Activated B cell treated with CpG ODN at 0.5 μM for 24 hours (primary cell): ENCODE measurements at regions of chr1 and their contacts with region 1.

Region 1: DNA sequence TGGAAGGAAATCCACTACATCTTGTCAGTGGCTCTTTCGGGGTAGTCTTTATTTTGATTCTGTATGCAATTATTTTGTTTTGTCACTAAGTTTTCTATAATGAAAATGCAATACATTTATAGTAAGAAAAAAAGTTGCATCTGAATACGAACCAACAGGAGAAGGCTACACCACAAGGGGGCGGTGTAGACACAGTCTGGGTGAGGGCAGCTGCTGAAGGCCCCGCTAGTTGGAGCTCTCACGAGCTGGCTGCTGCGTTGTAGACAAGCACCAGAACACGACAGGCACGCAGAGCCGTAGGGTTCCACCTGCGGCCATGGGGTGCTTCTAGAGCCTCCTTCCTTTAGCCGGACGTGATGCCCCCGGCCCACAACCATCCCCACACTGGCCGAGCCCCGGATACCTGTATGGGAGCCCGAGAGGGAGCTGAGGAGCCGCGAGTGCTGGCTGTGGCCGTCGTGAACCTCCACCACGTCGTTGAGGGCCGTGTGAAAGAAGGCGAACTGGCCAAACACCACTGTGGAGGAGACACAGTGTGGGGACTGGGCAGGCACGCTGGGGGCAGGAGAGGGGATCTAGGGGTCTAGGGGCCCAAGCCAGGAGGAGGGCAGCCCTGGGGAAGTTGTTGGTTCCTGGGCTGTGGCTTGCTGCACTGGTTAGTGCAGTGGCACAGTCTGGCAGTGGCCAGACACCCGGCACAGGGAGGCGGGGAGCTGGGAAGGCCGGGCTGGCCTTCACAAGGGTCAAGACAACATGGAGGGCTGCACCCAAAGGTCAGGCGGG is 160.8 kb downstream of the ZSCAN20 start:
- DNase-seq: peak; percentile 55
- ATAC-seq: peak; percentile 75
- H3K4me3 Mint-ChIP-seq: no peak overlapping the region
- H3K27ac Mint-ChIP-seq: no peak overlapping the region
- H3K4me1 Mint-ChIP-seq: no peaks in the 10 kb centered on the region
- H3K27me3 Mint-ChIP-seq: peaks cover 31% of the 10 kb centered on the region
- CTCF ChIP-seq: peak; percentile 83

Region 2: DNA sequence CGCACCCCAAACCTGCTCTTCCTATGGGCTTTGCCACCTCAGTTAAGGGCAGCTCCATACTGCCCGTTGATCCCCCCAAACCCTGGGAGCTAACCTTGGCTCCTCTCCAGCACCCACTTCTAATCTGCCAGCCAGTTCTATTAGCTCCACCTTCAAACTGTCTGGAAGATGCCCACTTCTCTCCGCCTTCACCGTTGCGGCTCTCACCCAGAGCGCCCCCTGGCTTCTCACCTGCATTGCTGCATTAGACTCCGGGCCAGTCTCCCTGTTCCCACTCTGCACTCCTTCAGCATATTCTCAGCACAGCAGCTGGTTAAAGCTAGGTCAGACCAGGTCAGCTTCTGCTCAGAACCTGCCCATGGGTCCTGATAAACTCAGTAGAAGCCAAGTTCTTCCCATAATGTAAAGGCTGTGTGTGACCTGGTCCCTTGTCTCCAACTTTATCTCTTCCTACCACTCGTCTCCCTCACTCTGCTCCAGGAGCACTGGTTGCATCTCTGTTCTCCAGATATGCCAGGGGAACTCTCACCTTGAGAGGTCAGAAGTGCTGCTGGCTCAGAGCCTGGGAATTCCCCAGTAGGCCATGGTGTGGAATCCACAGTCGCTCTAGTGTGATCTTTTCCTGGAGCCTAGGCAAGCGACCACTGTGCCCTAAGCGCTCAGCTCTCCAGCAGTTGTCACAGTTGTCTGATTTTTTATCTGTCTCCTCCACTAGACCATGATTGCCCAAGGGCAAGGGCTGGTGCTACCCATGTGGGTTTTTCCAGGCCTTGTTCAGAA is 380.9 kb after region 1 on chr1:
- CTCF ChIA-PET with region 1: no interaction called
- POLR2A ChIA-PET with region 1: no interaction called
- intact Hi-C with region 1: loop called (anchors 10 kb)
- DNase-seq: no peak
- ATAC-seq: no peak
- H3K4me3 Mint-ChIP-seq: no peak overlapping the region
- H3K27ac Mint-ChIP-seq: no peak overlapping the region
- H3K4me1 Mint-ChIP-seq: no peaks in the 10 kb centered on the region
- H3K27me3 Mint-ChIP-seq: peaks cover 8% of the 10 kb centered on the region
- CTCF ChIP-seq: no peak

Region 3: GRCh38 chr1:34162852-34163766 is 529.9 kb after region 1 on chr1:
- CTCF ChIA-PET with region 1: interaction called, 5 read pairs
- POLR2A ChIA-PET with region 1: no interaction called
- intact Hi-C with region 1: loop called (anchors 5 kb)
- DNase-seq: no peak
- ATAC-seq: no peak
- H3K4me3 Mint-ChIP-seq: peak overlapping the region; percentile 44
- H3K27ac Mint-ChIP-seq: no peak overlapping the region
- H3K4me1 Mint-ChIP-seq: peaks cover 16% of the 10 kb centered on the region
- H3K27me3 Mint-ChIP-seq: peaks cover 60% of the 10 kb centered on the region
- CTCF ChIP-seq: no peak

Region 4: GRCh38 chr1:34597877-34598514 is 964.8 kb after region 1 on chr1:
- CTCF ChIA-PET with region 1: interaction called, 13 read pairs
- POLR2A ChIA-PET with region 1: no interaction called
- intact Hi-C with region 1: loop called (anchors 2 kb)
- DNase-seq: peak; percentile 32
- ATAC-seq: no peak
- H3K4me3 Mint-ChIP-seq: no peak overlapping the region
- H3K27ac Mint-ChIP-seq: no peak overlapping the region
- H3K4me1 Mint-ChIP-seq: no peaks in the 10 kb centered on the region
- H3K27me3 Mint-ChIP-seq: peaks cover 7% of the 10 kb centered on the region
- CTCF ChIP-seq: no peak

Region 5: GRCh38 chr1:34681480-34682451 is 1048.6 kb after region 1 on chr1:
- CTCF ChIA-PET with region 1: no interaction called
- POLR2A ChIA-PET with region 1: no interaction called
- intact Hi-C with region 1: loop called (anchors 2 kb)
- DNase-seq: no peak
- ATAC-seq: no peak
- H3K4me3 Mint-ChIP-seq: no peak overlapping the region
- H3K27ac Mint-ChIP-seq: no peak overlapping the region
- H3K4me1 Mint-ChIP-seq: no peaks in the 10 kb centered on the region
- H3K27me3 Mint-ChIP-seq: peaks cover 9% of the 10 kb centered on the region
- CTCF ChIP-seq: peak; percentile 21

Region 6: GRCh38 chr1:34742667-34743270 is 1109.6 kb after region 1 on chr1:
- CTCF ChIA-PET with region 1: interaction called, 36 read pairs
- POLR2A ChIA-PET with region 1: no interaction called
- intact Hi-C with region 1: no loop called
- DNase-seq: peak; percentile 76
- ATAC-seq: peak; percentile 80
- H3K4me3 Mint-ChIP-seq: no peak overlapping the region
- H3K27ac Mint-ChIP-seq: no peak overlapping the region
- H3K4me1 Mint-ChIP-seq: no peaks in the 10 kb centered on the region
- H3K27me3 Mint-ChIP-seq: peaks cover 15% of the 10 kb centered on the region
- CTCF ChIP-seq: no peak